Esophagus squamous epithelium (tissue), 5 donors: ENCODE measurements at regions of chr2 and their contacts with region 1.

Region 1: GRCh38 chr2:113361051-113361450 is 76.4 kb upstream of the ZNG1B start:
- DNase-seq: no peak
- H3K4me3 ChIP-seq: no peak overlapping the region
- H3K27ac ChIP-seq: no peak overlapping the region
- H3K4me1 ChIP-seq: no peaks in the 10 kb centered on the region
- H3K27me3 ChIP-seq: no peaks in the 10 kb centered on the region
- CTCF ChIP-seq: no peak
- POLR2A ChIP-seq: no peak

Region 2: GRCh38 chr2:112065966-112066365 is 1295.1 kb before region 1 on chr2:
- intact Hi-C with region 1: no loop called
- DNase-seq: no peak
- H3K4me3 ChIP-seq: no peak overlapping the region
- H3K27ac ChIP-seq: no peak overlapping the region
- H3K4me1 ChIP-seq: no peaks in the 10 kb centered on the region
- H3K27me3 ChIP-seq: no peaks in the 10 kb centered on the region
- CTCF ChIP-seq: no peak
- POLR2A ChIP-seq: no peak

Region 3: GRCh38 chr2:112724591-112725525 is 636.2 kb before region 1 on chr2:
- intact Hi-C with region 1: no loop called
- DNase-seq: no peak
- H3K4me3 ChIP-seq: no peak overlapping the region
- H3K27ac ChIP-seq: no peak overlapping the region
- H3K4me1 ChIP-seq: peaks cover 0 to 11% (median 4%) of the 10 kb centered on the region in 3 donors
- H3K27me3 ChIP-seq: no peaks in the 10 kb centered on the region
- CTCF ChIP-seq: peak in 2 of 6 experiments; percentile 8 to 29
- POLR2A ChIP-seq: no peak

Region 4: DNA sequence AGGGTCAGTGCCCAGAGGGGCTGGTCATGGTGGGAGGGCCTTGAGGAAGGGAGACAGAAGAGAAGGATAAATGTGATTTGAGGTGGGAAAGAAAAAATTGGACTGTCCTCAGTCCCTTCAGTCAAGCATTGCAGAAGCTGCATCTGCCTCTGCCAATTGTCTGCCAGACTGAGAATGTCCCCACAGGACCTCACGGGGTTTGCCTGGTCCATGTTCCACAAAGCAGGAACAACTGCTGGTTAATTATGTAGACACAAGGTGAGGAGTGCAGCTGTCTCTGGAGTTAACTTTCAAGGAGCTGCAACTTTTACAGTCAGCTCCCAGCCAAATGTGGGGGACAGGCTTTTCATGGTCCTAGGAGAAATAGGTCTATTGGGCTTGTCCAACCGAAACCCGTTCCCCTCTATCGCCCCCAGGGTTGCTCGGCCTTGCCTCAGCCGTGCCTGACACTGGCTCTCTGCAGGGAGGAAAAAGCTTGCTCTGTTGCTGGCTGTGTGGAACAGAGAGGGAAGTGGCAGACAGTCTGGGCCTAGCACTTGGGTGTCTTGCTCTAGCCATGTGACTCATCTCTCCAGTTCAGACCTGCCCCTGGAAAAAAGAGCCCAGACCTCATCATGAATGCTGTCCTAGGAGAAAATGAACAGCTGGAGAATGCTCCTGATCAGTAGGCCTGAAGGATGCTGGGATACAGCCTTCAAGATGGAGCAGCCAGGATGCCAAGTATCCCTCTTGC is 51.2 kb before region 1 on chr2:
- intact Hi-C with region 1: loop called (anchors 10 kb)
- DNase-seq: no peak
- H3K4me3 ChIP-seq: no peak overlapping the region
- H3K27ac ChIP-seq: peak overlapping the region; percentile 39 to 66 (median 50)
- H3K4me1 ChIP-seq: peaks cover 0 to 44% (median 13%) of the 10 kb centered on the region in 3 donors
- H3K27me3 ChIP-seq: peaks cover 0 to 7% (median 0%) of the 10 kb centered on the region in 4 donors
- CTCF ChIP-seq: no peak
- POLR2A ChIP-seq: no peak